GM12878 (cell line): ENCODE measurements at regions of chr18 and their contacts with region 1.

Region 1: DNA sequence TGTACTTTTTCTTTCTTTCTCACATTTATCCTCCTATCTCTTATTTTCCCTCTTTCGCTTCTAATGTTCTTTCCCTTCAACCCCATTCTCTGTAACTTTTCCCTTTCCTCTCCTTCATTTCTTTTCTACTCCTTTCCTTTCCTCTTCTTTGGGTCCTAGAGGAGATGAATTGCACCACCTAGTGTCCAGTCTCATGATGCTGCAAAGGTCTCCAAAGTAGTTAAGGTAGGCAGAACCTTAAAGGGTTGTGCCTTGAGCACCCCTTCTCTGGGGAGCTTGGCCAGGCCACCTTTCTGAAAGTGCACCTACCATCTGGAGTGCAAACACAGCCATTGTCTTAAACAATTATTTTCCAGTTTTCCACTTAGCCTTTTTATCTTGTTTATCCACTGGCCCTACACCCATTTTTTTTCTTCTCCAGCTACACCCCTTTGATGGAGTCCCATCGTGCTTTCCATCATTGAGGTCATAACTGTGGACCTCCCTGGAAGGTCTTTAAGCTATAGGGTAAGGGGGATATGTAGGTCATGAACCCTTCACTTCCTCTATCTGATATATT is 156.0 kb downstream of the ESCO1 start:
- DNase-seq: no peak
- ATAC-seq: peak; percentile 77
- H3K4me3 ChIP-seq: no peak overlapping the region
- H3K27ac ChIP-seq: no peak overlapping the region
- H3K4me1 ChIP-seq: no peaks in the 10 kb centered on the region
- H3K27me3 ChIP-seq: no peaks in the 10 kb centered on the region; a peak in 2 of 4 replicates
- CTCF ChIP-seq: peak; percentile 58 to 67 (median 64)
- EP300 ChIP-seq: no peak
- POLR2A ChIP-seq: no peak
- RAD21 ChIP-seq: peak; percentile 71

Region 2: DNA sequence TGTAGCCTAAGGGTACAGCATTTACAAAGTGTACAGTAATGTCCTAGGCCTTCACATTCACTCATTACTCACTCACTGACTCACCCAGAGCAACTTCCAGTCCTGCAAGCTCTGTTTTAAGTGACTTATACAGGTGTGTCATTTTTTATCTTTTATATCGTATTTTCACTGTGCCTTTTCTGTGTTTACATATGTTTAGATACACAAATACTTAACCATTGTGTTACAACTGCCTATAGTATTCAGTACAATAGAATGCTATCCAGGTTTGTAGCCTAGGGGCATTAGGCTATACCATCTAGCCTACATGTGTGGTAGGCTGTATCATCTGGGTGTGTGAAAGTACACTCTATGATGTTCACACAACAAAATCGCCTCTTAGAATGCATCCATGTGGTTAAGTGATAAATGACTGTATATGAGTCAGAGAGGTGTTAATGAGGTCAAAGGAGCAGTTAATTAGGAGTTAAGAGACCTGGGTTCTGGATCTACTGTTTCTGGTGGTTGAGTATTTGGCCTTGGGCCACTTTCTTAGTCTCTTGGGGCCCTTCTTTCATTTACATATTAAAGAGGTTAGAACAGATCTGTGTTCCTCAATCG is 53.4 kb before region 1 on chr18:
- CTCF ChIA-PET with region 1: no interaction called
- POLR2A ChIA-PET with region 1: no interaction called
- RAD21 ChIA-PET with region 1: no interaction called
- SMC1A ChIA-PET with region 1: no interaction called
- in situ Hi-C with region 1: no loop called
- intact Hi-C with region 1: loop called (anchors 5 kb)
- DNase-seq: peak; percentile 35
- ATAC-seq: peak; percentile 95
- H3K4me3 ChIP-seq: no peak overlapping the region
- H3K27ac ChIP-seq: no peak overlapping the region
- H3K4me1 ChIP-seq: no peaks in the 10 kb centered on the region
- H3K27me3 ChIP-seq: no peaks in the 10 kb centered on the region
- CTCF ChIP-seq: no peak
- EP300 ChIP-seq: peak in 1 of 2 experiments; percentile 38; a peak in 1 of 4 replicates
- POLR2A ChIP-seq: no peak
- RAD21 ChIP-seq: no peak

Region 3: GRCh38 chr18:21433436-21433835 is 11.1 kb before region 1 on chr18:
- CTCF ChIA-PET with region 1: no interaction called
- POLR2A ChIA-PET with region 1: no interaction called
- RAD21 ChIA-PET with region 1: no interaction called
- SMC1A ChIA-PET with region 1: no interaction called
- in situ Hi-C with region 1: no loop called
- intact Hi-C with region 1: no loop called
- DNase-seq: no peak
- ATAC-seq: no peak
- H3K4me3 ChIP-seq: no peak overlapping the region
- H3K27ac ChIP-seq: no peak overlapping the region
- H3K4me1 ChIP-seq: no peaks in the 10 kb centered on the region
- H3K27me3 ChIP-seq: no peaks in the 10 kb centered on the region
- CTCF ChIP-seq: no peak
- EP300 ChIP-seq: no peak
- POLR2A ChIP-seq: no peak
- RAD21 ChIP-seq: no peak

Region 4: DNA sequence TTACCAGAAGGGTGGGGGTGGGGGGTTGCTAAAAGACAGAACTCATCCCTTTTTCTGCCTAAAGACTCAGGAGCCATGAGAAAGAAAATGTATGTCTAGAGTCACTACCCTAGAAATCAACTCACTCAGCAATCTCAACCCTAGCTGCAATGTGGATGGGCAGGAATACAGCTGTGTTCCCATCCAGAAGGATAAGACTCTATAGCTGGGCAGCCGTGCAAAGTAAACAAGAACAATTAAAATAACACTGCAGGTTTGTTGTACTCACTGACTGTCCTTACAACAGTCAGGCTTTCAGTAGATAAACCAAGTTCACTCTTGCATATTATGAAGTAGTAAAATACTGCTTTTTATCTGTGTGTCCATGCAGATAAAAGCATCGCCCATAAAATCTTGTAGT is 81.9 kb after region 1 on chr18:
- CTCF ChIA-PET with region 1: no interaction called
- POLR2A ChIA-PET with region 1: no interaction called
- RAD21 ChIA-PET with region 1: no interaction called
- SMC1A ChIA-PET with region 1: no interaction called
- in situ Hi-C with region 1: no loop called
- intact Hi-C with region 1: no loop called
- DNase-seq: no peak
- ATAC-seq: no peak
- H3K4me3 ChIP-seq: no peak overlapping the region
- H3K27ac ChIP-seq: no peak overlapping the region
- H3K4me1 ChIP-seq: no peaks in the 10 kb centered on the region
- H3K27me3 ChIP-seq: no peaks in the 10 kb centered on the region
- CTCF ChIP-seq: no peak
- EP300 ChIP-seq: no peak
- POLR2A ChIP-seq: no peak
- RAD21 ChIP-seq: no peak